AG04450 (cell line): ENCODE measurements at regions of chr17 and their contacts with region 1.

Region 1: DNA sequence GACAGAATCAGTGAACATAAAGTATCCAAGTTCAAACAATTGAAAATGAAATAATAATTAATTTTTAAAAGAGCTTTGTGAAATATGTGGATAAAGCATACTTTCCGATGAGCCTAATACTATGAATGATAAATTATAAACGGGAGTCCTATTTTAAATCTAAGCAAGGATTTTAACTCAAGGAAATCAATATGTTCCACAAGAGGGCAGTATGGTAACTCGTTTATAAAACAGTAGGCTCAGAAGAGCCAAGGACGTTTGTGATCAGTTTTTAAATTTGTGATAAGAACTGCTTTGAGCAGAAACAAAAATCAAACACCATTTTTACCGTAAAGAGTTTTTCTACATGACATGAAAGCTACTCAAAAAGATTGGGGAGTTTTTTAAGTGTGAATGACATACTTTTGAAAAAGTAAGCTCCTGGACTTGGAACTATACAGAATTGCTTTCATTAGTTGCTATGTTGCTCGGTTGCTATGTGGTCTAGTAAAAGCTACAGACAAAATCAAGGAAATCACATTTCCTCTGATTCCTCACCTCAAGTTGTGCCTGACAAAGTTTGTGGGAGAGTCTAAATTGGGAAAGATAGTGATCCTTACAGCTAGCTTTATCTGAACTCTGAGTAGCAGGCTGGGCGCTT is 11.8 kb upstream of the TEKT1 start:
- DNase-seq: no peak
- H3K4me3 ChIP-seq: no peak overlapping the region
- H3K27ac ChIP-seq: no peak overlapping the region
- H3K27me3 ChIP-seq: no peaks in the 10 kb centered on the region
- CTCF ChIP-seq: peak; percentile 47; the same call in 1 of the 2 replicates

Region 2: GRCh38 chr17:6496116-6496481 is 347.3 kb before region 1 on chr17:
- CTCF ChIA-PET with region 1: no interaction called
- POLR2A ChIA-PET with region 1: no interaction called
- DNase-seq: no peak
- H3K4me3 ChIP-seq: no peak overlapping the region
- H3K27ac ChIP-seq: no peak overlapping the region
- H3K27me3 ChIP-seq: peaks cover 18% of the 10 kb centered on the region
- CTCF ChIP-seq: no peak

Region 3: DNA sequence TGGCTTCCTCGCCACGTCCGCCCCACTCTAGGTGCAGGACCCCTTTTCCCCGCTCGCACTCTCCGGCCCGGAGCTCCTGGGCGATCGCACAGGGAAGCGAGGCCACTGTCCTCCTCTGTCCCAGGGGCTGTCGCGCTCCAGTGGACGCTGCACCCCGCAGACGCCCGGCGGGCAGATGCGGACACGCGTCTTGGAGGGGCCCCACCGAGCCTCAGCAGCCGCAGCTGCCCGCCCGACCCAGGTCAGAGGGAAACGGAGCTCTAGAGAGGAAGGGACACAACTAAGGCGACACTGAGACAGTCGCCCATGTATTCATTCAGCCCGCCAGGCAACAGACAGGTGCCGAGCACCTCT is 129.5 kb before region 1 on chr17:
- CTCF ChIA-PET with region 1: interaction called, 10 read pairs
- POLR2A ChIA-PET with region 1: no interaction called
- DNase-seq: no peak
- H3K4me3 ChIP-seq: no peak overlapping the region
- H3K27ac ChIP-seq: no peak overlapping the region
- H3K27me3 ChIP-seq: peaks cover 35% of the 10 kb centered on the region
- CTCF ChIP-seq: no peak

Region 4: GRCh38 chr17:6853764-6854442 is 10.5 kb after region 1 on chr17:
- CTCF ChIA-PET with region 1: interaction called, 10 read pairs
- POLR2A ChIA-PET with region 1: no interaction called
- DNase-seq: no peak
- H3K4me3 ChIP-seq: no peak overlapping the region
- H3K27ac ChIP-seq: no peak overlapping the region
- H3K27me3 ChIP-seq: peaks cover 7% of the 10 kb centered on the region
- CTCF ChIP-seq: peak; percentile 28

Region 5: DNA sequence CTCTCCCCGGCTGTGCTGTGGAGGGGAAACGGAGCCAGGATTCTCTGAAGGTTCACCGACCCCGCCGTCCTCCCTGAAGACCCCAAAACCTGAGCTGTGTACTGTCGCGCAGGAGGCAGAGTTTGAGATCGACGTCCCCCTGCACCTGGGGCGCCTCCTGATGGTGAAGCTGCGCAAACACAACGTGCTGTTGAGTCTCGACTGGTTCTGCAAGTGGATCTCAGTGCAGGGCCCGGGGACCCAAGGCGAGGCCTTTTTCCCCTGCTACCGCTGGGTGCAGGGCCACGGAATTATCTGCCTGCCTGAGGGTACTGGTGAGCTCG is 50.8 kb after region 1 on chr17:
- CTCF ChIA-PET with region 1: interaction called, 14 read pairs
- POLR2A ChIA-PET with region 1: no interaction called
- DNase-seq: no peak
- H3K4me3 ChIP-seq: no peak overlapping the region
- H3K27ac ChIP-seq: no peak overlapping the region
- H3K27me3 ChIP-seq: peaks cover 34% of the 10 kb centered on the region
- CTCF ChIP-seq: peak; percentile 36

Region 6: DNA sequence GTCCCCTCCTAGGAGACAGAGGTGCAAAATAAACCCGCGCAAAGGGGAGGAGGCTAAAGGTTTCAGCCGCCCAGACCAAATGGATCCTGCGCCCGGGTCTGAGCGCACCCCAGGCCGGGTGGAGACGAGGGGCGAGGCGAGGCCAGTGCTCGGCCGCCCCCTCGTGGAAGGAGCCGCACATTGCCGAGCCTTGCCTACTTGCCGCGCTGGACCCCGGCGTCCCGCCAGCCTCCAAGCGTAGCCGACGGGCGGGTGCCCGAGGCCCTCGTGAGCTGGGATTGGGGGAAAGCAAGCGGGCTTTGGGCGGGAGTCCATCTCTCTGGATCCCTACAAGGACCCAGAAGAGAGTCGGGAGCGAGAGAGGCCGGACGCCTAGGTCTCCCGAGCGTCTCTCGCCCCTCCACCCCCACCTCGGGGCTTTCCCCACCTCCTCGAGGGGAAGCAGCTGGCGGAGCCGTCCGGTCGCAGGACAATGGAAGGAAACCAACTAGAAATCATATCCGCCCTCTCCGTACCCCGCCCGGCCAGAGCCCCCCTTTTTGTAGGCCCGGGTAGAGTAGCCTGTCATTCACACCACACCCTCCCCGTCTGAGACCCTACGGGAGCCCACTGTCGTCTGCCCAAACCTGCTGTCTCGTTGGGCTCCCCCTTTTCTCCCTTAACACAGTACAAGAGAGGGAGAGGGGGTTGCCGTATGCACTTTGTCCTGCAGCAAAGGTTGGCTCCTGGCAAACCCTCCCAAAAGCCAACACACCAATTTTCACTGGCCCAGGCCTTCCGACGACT is 178.8 kb after region 1 on chr17:
- CTCF ChIA-PET with region 1: interaction called, 16 read pairs
- POLR2A ChIA-PET with region 1: no interaction called
- DNase-seq: no peak
- H3K4me3 ChIP-seq: peak overlapping the region; percentile 36
- H3K27ac ChIP-seq: no peak overlapping the region
- H3K27me3 ChIP-seq: no peaks in the 10 kb centered on the region
- CTCF ChIP-seq: peak; percentile 87